Posterior cingulate gyrus (tissue), 11 donors: ENCODE measurements at regions of chr1 and their contacts with region 1.

Region 1: DNA sequence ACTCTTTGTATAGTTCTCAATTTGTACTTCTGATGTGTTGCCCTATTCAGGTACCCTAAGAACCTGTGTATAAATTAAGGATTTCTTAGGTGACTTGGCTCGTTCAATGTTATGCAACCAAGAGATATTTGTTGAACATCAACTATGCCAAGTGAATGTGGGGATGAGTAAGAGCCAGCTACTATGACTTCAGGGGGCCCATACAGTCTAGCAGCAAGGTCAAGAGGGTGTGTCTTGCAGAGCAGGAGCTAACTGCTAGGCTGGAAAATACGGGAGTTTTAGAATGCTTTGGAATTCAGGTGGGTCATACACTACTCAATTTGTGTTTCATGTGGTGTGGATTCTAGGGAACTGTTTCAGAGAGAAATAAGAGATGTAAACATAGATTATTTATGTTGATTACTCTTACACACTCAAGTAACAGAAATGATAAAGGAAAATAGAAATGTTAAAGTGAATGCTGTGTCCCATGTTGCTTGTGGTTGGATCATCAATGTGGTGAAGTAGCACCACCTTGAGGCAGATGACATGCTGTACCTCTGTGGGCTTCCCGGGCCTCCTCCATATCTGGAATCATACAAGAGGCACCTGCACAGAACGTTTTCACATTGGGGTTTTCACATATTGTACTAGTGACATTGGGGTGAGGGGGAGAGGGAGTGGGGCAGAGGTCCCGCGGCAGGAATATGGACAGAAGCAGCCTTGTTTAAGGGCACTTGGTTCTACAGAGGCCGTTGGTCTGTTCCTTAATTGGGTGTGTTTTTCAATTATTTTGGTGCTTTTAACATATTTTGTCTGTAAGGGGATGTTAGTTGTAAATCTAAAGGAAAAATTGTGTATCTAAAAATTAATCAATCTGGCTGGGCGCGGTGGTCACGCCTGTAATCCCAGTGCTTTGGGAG is 12.4 kb downstream of the ARPC5 start:
- DNase-seq: peak in 7 of 10 donors; percentile 37 to 88 (median 59)

Region 2: GRCh38 chr1:183281553-183282091 is 341.5 kb before region 1 on chr1:
- intact Hi-C with region 1: loop called (anchors 5 kb)
- DNase-seq: peak; percentile 69 to 98 (median 90)

Region 3: DNA sequence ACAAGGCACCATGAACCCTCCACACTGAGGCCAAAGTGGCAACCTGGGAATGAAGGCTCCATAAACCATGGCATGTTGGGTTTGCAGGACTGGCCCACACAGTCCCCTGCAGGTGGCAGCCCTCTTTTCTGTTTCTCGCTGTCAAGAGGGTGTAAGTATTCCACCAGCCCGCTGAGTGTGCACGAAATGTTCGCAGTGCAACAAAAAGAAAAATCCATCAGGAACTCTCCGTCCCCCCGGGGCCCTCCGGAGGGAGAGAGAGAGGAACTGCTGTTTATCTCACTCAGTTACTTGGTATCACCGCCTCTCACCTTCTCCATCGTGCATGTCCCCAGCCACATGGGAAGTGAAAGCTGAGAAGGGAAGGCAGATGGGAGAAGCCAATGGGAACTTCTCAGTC is 71.2 kb before region 1 on chr1:
- intact Hi-C with region 1: loop called (anchors 5 kb)
- DNase-seq: no peak

Region 4: DNA sequence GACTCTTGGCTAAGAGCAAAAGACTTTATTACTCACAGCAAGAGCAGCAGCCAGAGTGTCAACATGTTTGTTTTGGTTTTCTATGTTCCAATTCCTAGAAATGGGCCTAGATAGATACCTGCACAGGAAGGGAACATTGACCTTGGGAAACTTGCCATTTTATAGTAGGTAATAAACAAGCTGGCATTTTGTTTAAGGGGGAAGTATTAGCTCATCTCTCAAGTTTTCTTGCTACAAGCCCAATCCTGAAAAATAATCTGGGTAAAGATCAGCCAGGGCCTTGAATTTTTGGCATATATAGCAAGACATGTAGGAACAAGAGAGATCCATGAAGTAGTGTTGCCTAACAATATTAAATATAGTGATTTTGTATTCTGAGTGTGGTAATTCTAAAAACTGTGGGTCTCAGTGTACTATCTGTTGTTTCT is 130.3 kb after region 1 on chr1:
- intact Hi-C with region 1: no loop called
- DNase-seq: no peak